Kidney (tissue), 22 donors: ENCODE measurements at regions of chr17 and their contacts with region 1.

Region 1: GRCh38 chr17:68972119-68972704 is 17.0 kb upstream of the ABCA8 start:
- DNase-seq: peak in 2 of 5 donors; percentile 26 to 50
- H3K4me3 ChIP-seq: no peak overlapping the region
- H3K27ac ChIP-seq: no peak overlapping the region
- H3K4me1 ChIP-seq: no peaks in the 10 kb centered on the region
- H3K27me3 ChIP-seq: no peaks in the 10 kb centered on the region
- CTCF ChIP-seq: peak; percentile 69

Region 2: DNA sequence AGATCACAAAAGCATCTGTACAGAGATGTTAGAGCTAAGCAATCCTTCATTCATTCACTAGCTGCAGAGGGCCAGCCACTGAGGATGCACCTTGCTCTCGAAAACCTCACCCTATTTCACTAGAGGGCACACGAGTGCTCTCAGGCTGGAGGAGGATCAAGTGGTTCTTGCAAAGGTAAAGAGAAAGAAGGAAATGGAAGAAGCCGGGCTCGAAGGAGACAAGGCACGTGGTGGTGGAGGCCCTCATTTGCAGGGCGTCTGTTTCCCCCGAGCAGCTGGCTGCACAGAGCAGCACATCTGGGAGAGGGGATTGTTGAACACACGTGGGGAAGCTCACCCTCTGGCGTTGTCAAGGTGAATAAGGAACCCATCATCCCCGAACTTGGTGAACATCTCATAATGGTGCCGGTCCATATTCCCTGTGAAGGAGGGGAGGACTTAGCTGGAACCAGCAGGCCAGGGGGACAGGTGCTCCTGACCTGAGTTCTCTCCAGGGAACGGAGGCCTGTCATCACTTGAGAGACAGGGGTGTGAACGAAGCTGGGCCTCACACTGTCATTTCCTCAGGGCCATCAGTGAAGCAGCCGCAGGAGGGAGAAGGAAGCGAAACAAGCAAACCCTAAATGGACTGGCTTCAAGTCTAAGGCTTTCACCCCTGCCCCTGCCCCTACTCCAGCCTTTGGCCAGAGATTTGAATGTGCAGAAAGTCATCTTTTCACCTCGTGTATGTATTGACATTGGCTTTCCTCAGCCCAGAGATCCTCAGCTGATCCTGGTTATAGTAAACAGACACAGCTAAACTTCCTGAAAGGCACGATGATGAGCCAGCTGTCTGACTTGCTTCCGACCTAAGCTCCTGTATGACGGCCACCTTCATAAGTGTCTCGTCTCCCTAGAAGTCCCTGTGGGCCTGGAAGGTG is 432.4 kb before region 1 on chr17:
- intact Hi-C with region 1: no loop called
- DNase-seq: peak in 4 of 5 donors; percentile 31 to 56 (median 42)
- H3K4me3 ChIP-seq: no peak overlapping the region
- H3K27ac ChIP-seq: no peak overlapping the region
- H3K4me1 ChIP-seq: peaks cover 0 to 3% (median 0%) of the 10 kb centered on the region in 3 donors
- H3K27me3 ChIP-seq: no peaks in the 10 kb centered on the region
- CTCF ChIP-seq: peak; percentile 23

Region 3: GRCh38 chr17:68771867-68772515 is 200.2 kb before region 1 on chr17:
- intact Hi-C with region 1: loop called (anchors 10 kb)
- DNase-seq: peak in 2 of 5 donors; percentile 72 to 81
- H3K4me3 ChIP-seq: peak overlapping the region in 2 of 3 donors; percentile 20 to 48
- H3K27ac ChIP-seq: peak overlapping the region in 1 of 2 donors; percentile 37
- H3K4me1 ChIP-seq: no peaks in the 10 kb centered on the region
- H3K27me3 ChIP-seq: no peaks in the 10 kb centered on the region
- CTCF ChIP-seq: peak; percentile 73

Region 4: DNA sequence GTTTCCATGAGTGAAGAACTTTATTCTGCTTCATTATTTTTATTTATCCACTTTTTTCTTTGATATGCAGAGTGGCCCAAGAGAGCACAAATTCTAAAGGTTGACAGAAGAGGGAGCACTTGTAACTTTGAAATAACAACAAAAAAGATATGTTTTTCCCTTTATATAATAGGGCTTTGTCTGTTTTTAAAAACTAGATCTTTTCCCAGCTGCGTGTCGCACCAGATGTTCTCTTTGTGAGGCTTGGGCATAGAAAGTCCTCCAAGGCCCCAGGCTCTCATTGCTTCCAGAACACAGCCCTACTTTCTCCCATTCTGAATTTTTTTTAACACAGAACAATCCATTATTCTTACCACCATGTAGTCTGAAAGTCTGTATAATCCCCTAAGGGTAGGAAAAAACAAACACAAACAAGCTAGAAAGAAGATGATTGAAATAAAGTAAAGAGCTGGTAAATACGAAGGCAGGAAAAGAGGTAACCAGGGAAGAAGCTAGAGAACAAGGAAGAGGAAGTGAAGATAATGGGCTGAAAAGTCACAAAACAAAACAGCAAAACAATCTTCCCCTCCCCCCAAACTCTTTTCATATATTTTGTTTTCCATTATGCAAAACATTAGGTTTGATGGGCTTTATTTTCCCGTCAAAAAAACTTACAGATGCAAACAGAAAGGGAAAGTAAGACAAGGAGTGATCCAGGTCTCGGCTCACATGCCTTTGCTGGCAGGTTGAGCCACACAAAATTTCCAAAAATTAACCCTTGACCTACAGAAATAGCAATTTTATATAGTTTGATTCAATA is 177.4 kb before region 1 on chr17:
- intact Hi-C with region 1: loop called (anchors 5 kb)
- DNase-seq: peak in 1 of 5 donors; percentile 73
- H3K4me3 ChIP-seq: peak overlapping the region in 1 of 3 donors; percentile 5
- H3K27ac ChIP-seq: peak overlapping the region; percentile 10 to 57
- H3K4me1 ChIP-seq: peaks cover 0 to 3% (median 0%) of the 10 kb centered on the region in 3 donors
- H3K27me3 ChIP-seq: no peaks in the 10 kb centered on the region
- CTCF ChIP-seq: peak; percentile 11

Region 5: GRCh38 chr17:68892658-68893057 is 79.6 kb before region 1 on chr17:
- intact Hi-C with region 1: no loop called
- DNase-seq: no peak
- H3K4me3 ChIP-seq: no peak overlapping the region
- H3K27ac ChIP-seq: no peak overlapping the region
- H3K4me1 ChIP-seq: no peaks in the 10 kb centered on the region
- H3K27me3 ChIP-seq: no peaks in the 10 kb centered on the region
- CTCF ChIP-seq: no peak

Region 6: DNA sequence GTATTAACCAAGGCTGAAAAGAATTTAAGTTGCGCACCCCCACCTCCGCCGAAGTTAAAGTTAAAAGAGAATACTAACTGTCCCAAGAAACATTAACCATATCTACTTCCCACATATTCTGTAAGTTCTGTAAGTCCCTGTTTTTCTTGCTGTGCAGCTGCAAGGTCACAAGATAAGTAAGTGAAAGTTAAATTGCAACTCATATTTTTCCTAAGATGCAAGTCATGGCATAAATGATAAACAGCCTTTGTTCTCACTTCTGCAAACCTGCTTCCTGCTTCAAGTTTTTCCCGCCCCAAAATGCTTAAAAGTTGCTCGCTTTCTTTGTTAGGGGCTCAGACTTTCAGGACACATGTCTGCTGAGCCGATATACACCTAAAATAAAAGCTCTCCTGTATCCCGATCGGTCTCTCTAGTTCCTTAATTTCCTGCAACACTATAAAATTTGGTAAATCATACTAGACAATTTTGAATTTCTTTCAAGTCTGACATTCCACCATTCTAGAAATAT is 121.1 kb after region 1 on chr17:
- intact Hi-C with region 1: no loop called
- DNase-seq: peak in 2 of 5 donors; percentile 22 to 47
- H3K4me3 ChIP-seq: peak overlapping the region in 2 of 3 donors; percentile 9 to 20
- H3K27ac ChIP-seq: no peak overlapping the region
- H3K4me1 ChIP-seq: no peaks in the 10 kb centered on the region
- H3K27me3 ChIP-seq: no peaks in the 10 kb centered on the region
- CTCF ChIP-seq: no peak